H1 (cell line): ENCODE measurements at regions of chr5 and their contacts with region 1.

Region 1: DNA sequence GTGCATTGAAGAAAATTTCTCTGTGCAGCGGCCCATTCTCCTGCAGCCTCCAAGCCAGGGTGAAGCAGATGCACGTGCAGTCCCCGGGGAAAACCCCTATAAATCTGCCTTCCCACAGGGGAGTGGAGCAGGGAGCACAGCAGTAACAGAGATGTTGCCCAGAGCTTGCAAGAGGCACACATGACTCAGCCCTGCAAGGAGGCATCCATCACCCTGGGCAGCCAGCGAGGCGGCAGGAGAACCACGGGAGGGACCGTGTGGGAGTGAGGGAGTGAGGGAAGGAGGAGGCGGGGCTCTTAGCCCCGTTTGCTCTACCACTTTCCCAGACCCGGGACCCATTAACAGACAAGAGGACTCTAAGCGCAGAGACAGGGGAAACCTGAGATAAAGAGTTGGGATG is 96.2 kb upstream of the ARAP3 start:
- DNase-seq: no peak
- H3K4me3 ChIP-seq: no peak overlapping the region
- H3K27ac ChIP-seq: no peak overlapping the region
- H3K4me1 ChIP-seq: peaks cover 0 to 10% (median 6%) of the 10 kb centered on the region in 4 experiments; a peak in 6 of 7 replicates
- H3K27me3 ChIP-seq: no peaks in the 10 kb centered on the region
- CTCF ChIP-seq: no peak
- EP300 ChIP-seq: no peak
- POLR2A ChIP-seq: no peak
- RAD21 ChIP-seq: no peak

Region 2: DNA sequence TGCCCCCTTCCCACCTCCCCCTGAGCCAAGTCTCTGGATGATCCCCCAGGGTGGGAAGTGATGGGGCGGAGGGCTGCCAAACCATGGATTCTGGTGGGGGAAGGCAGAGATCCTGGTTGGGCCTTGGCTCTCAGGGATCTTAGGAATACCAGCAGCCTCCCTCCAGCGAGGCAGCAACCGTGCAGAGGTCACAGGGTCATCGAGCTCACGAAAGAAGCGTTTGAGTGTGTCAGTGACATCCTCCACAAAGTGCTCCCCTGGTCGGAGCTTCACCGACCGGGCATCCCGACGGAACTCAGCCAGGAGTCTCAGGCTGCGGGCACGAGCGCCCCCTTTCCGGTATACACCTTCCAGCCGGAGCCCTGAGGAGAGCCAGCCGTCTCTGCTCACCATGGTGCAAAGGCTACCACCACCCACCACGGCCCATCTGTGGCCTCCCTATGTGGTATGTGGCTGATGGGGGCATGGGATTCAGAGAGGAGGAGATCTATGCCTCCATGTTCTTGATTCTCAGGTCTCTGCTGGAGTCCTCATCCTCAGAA is 116.2 kb before region 1 on chr5:
- CTCF ChIA-PET with region 1: no interaction called
- POLR2A ChIA-PET with region 1: no interaction called
- DNase-seq: no peak
- H3K4me3 ChIP-seq: no peak overlapping the region
- H3K27ac ChIP-seq: no peak overlapping the region
- H3K4me1 ChIP-seq: no peaks in the 10 kb centered on the region; a peak in 2 of 7 replicates
- H3K27me3 ChIP-seq: no peaks in the 10 kb centered on the region
- CTCF ChIP-seq: peak in 1 of 3 experiments; percentile 10; a peak in 1 of 4 replicates
- EP300 ChIP-seq: no peak
- POLR2A ChIP-seq: no peak
- RAD21 ChIP-seq: no peak

Region 3: DNA sequence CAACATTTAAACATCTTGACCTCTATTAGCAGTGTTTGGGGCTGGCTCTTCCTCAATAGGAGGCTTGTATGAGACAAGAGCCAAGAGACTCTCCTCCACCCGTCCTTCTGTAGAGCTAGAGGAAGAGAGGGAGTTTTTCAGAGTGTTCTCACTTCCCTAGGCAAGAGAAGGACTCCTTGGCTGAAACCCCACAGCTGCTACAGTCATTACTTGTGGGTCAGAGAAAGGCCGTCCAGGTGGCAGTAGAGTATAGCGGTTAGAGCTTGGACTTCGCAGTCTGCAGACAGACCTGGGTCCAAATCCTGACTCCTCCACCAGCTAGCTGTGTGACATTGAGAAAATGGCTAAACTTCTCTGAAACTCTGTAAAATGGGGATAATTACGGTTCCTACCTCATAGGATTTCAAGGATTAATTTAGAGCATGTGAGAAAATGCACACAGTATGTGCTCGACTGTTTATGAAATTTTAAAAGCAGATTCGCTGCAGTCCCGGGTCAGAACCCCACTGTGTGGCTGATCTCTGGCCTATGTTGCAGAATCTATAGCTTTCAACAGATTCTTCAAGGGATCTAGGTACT is 15.3 kb before region 1 on chr5:
- CTCF ChIA-PET with region 1: interaction called, 54 read pairs
- POLR2A ChIA-PET with region 1: interaction called, 11 read pairs
- DNase-seq: no peak
- H3K4me3 ChIP-seq: no peak overlapping the region
- H3K27ac ChIP-seq: no peak overlapping the region
- H3K4me1 ChIP-seq: peaks cover 10 to 24% (median 21%) of the 10 kb centered on the region in 4 experiments
- H3K27me3 ChIP-seq: no peaks in the 10 kb centered on the region; a peak in 1 of 7 replicates
- CTCF ChIP-seq: peak in 1 of 3 experiments; percentile 18; a peak in 1 of 4 replicates
- EP300 ChIP-seq: no peak
- POLR2A ChIP-seq: no peak
- RAD21 ChIP-seq: peak; percentile 37 to 58; a peak in 3 of 4 replicates

Region 4: GRCh38 chr5:141793881-141794280 is 15.7 kb after region 1 on chr5:
- CTCF ChIA-PET with region 1: interaction called, 21 read pairs
- POLR2A ChIA-PET with region 1: interaction called, 3 read pairs
- DNase-seq: no peak
- H3K4me3 ChIP-seq: no peak overlapping the region
- H3K27ac ChIP-seq: no peak overlapping the region
- H3K4me1 ChIP-seq: peaks cover 0 to 9% (median 2%) of the 10 kb centered on the region in 4 experiments; a peak in 2 of 7 replicates
- H3K27me3 ChIP-seq: no peaks in the 10 kb centered on the region
- CTCF ChIP-seq: no peak
- EP300 ChIP-seq: no peak
- POLR2A ChIP-seq: no peak
- RAD21 ChIP-seq: no peak

Region 5: GRCh38 chr5:141805874-141806595 is 27.8 kb after region 1 on chr5:
- CTCF ChIA-PET with region 1: interaction called, 210 read pairs
- POLR2A ChIA-PET with region 1: interaction called, 4 read pairs
- DNase-seq: no peak
- H3K4me3 ChIP-seq: no peak overlapping the region
- H3K27ac ChIP-seq: no peak overlapping the region
- H3K4me1 ChIP-seq: peaks cover 11 to 39% (median 17%) of the 10 kb centered on the region in 4 experiments
- H3K27me3 ChIP-seq: no peaks in the 10 kb centered on the region; a peak in 1 of 7 replicates
- CTCF ChIP-seq: no peak
- EP300 ChIP-seq: no peak
- POLR2A ChIP-seq: no peak
- RAD21 ChIP-seq: no peak

Region 6: GRCh38 chr5:141903261-141903660 is 125.1 kb after region 1 on chr5:
- CTCF ChIA-PET with region 1: no interaction called
- POLR2A ChIA-PET with region 1: no interaction called
- DNase-seq: no peak
- H3K4me3 ChIP-seq: no peak overlapping the region
- H3K27ac ChIP-seq: no peak overlapping the region
- H3K4me1 ChIP-seq: no peaks in the 10 kb centered on the region
- H3K27me3 ChIP-seq: no peaks in the 10 kb centered on the region; a peak in 1 of 7 replicates
- CTCF ChIP-seq: no peak
- EP300 ChIP-seq: no peak
- POLR2A ChIP-seq: no peak
- RAD21 ChIP-seq: no peak